ENCODE measurements at regions of chr10 and their contacts with region 1.

Region 1: GRCh38 chr10:69123747-69124562 is at the start of gene VPS26A:
- DNase-seq: peak; percentile 100
- H3K4me3 ChIP-seq: peak within 1 kb of the TSS; percentile 95
- H3K4me3 Mint-ChIP-seq: peak within 1 kb of the TSS; percentile 97
- H3K27ac Mint-ChIP-seq: peak within 1 kb of the TSS; percentile 97
- H3K4me1 ChIP-seq: peaks cover 9% of the 10 kb centered on the region; the same call in 1 of the 2 replicates
- H3K4me1 Mint-ChIP-seq: no peaks in the 10 kb centered on the region
- H3K27me3 ChIP-seq: no peaks in the 10 kb centered on the region
- H3K27me3 Mint-ChIP-seq: no peaks in the 10 kb centered on the region
- CTCF ChIP-seq: no peak
- total RNA-seq, gene VPS26A: 133 and 143 TPM in 2 replicates

Region 2: GRCh38 chr10:68988530-68989316 is 135.2 kb before region 1 on chr10 and contains the start of gene KIFBP:
- CTCF ChIA-PET with region 1: no interaction called
- POLR2A ChIA-PET with region 1: no interaction called
- intact Hi-C with region 1: loop called (anchors 1 kb)
- DNase-seq: peak; percentile 99
- H3K4me3 ChIP-seq: peak within 1 kb of the TSS; percentile 76
- H3K4me3 Mint-ChIP-seq: peak within 1 kb of the TSS; percentile 81
- H3K27ac Mint-ChIP-seq: peak within 1 kb of the TSS; percentile 90
- H3K4me1 ChIP-seq: peaks cover 7% of the 10 kb centered on the region; the same call in 1 of the 2 replicates
- H3K4me1 Mint-ChIP-seq: peaks cover 41% of the 10 kb centered on the region
- H3K27me3 ChIP-seq: no peaks in the 10 kb centered on the region
- H3K27me3 Mint-ChIP-seq: no peaks in the 10 kb centered on the region
- CTCF ChIP-seq: peak; percentile 67 to 86
- total RNA-seq, gene KIFBP: 57.6 and 58.9 TPM in 2 replicates

Region 3: DNA sequence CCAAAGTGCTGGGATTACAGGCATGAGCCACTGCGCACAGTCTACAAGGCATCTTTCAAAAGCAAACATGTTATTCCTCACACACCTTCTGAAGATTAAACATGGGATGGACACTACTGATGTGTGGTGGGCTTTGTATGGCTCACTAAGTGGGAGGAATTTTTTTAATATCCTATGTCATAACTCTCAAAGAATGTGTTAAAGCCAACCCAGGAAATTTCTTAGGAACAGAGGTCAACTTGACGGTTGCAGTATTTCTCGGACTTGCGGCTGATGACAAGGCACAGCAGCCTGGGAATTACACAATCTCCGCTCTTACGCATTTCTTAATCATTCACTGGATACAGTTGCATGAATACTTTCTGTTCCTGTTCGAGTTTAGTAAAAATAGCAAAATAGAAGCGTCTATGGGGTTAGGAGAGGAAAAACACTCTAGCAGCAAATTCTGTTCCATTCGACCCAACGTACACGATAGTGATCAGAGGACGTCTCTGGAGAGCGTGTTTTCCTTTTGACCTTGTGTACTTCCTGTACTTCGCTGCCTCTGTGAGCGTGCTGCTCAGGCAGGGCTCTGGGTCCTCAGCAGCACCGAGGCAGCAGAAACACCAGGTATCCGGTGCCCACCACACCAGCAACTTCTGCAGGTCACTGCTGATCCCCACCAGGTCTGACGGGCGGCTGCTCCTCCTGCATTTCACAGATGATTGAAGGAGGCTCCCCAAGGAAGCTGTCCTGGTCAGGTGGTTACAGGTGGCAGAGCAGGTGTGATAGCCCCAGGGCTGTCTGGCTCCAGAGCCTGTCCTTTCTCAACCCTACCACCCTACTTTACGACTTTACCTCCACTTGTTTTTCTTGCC is 62.4 kb before region 1 on chr10:
- CTCF ChIA-PET with region 1: no interaction called
- POLR2A ChIA-PET with region 1: no interaction called
- intact Hi-C with region 1: loop called (anchors 5 kb)
- DNase-seq: peak; percentile 66 to 76
- H3K4me3 ChIP-seq: peak overlapping the region; percentile 39
- H3K4me3 Mint-ChIP-seq: peak overlapping the region; percentile 71
- H3K27ac Mint-ChIP-seq: peak overlapping the region; percentile 34
- H3K4me1 ChIP-seq: peaks cover 6% of the 10 kb centered on the region; the same call in 1 of the 2 replicates
- H3K4me1 Mint-ChIP-seq: no peaks in the 10 kb centered on the region
- H3K27me3 ChIP-seq: no peaks in the 10 kb centered on the region
- H3K27me3 Mint-ChIP-seq: peaks cover 5% of the 10 kb centered on the region
- CTCF ChIP-seq: no peak

Region 4: DNA sequence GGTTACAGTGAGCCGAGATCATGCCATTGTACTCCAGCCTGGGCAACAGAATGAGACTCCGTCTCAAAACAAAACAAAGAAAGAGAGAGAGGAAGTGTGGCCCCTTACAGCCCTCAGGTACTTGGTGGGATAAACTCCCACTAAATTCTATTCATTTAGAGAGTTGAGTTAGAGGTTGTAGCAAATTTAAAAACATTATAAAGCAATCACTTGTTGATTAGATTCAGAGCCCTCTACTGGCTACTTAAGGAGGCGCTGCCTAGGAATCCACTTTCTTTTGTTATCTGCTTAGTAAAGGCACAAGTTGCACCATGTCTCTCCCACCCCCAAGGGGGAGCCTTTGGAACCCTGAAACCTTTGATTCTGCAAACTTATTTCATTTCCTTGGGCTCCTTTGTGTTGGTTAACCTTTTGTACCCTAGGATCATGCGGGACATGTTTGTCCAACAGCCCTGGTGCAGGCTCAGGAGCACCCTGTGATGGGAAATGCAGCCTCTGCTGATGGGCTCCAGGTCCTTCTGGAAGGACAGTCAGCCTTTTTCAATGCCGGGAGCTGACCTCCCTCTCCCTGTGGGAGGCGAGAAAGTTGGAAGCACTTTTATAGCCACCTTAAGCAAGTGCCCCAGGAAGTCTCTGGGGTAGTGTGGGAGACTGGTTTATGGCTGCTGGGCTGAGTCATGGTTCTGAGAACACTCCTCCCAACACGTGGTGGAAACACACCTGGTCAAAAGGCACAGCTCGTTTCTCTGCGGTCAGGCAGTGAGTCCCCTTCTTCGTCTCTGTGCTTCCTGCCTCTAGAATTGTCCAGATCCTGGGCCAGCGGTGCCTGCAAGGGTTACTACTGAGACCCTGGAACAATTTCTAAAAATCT is 98.4 kb after region 1 on chr10:
- CTCF ChIA-PET with region 1: no interaction called
- POLR2A ChIA-PET with region 1: no interaction called
- intact Hi-C with region 1: loop called (anchors 1 kb)
- DNase-seq: peak; percentile 89 to 96
- H3K4me3 ChIP-seq: no peak overlapping the region
- H3K4me3 Mint-ChIP-seq: peak overlapping the region; percentile 68
- H3K27ac Mint-ChIP-seq: peak overlapping the region; percentile 86
- H3K4me1 ChIP-seq: peaks cover 60% of the 10 kb centered on the region
- H3K4me1 Mint-ChIP-seq: peaks cover 24% of the 10 kb centered on the region
- H3K27me3 ChIP-seq: no peaks in the 10 kb centered on the region
- H3K27me3 Mint-ChIP-seq: no peaks in the 10 kb centered on the region
- CTCF ChIP-seq: peak; percentile 84 to 89

Region 5: DNA sequence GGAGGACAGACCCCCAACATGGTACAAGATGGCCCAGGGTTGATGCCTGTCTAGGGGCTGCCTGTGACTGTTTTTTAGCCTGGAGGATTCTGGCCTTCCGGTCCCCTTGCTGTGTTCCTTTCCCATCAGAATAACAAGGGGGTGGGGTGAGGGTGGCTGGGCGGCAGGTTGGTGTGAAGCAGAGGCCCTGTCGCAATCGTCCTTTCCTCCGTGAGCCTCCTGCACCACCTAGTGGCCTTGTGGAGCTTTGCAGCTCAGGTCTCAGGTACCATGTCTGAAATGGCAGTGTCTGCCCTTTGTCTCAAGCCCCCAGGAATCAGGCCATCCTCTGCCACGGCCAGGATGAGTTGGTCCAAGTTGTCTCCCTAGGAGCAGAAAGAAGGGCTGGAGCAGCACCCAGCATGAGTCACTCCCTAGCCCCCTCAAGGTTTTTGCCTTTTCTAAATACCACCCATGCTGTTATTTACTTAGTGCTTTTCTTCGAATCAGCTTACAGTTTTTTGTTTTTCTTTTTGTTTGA is 268.6 kb after region 1 on chr10:
- CTCF ChIA-PET with region 1: interaction called, 3 read pairs
- POLR2A ChIA-PET with region 1: no interaction called
- intact Hi-C with region 1: loop called (anchors 10 kb)
- DNase-seq: peak; percentile 91 to 94
- H3K4me3 ChIP-seq: no peak overlapping the region
- H3K4me3 Mint-ChIP-seq: no peak overlapping the region
- H3K27ac Mint-ChIP-seq: no peak overlapping the region
- H3K4me1 ChIP-seq: peaks cover 4% of the 10 kb centered on the region
- H3K4me1 Mint-ChIP-seq: no peaks in the 10 kb centered on the region
- H3K27me3 ChIP-seq: no peaks in the 10 kb centered on the region
- H3K27me3 Mint-ChIP-seq: no peaks in the 10 kb centered on the region
- CTCF ChIP-seq: peak; percentile 99 to 100